Mammary epithelial cell (primary cell): ENCODE measurements at regions of chr19 and their contacts with region 1.

Region 1: GRCh38 chr19:56294549-56294948 is 20.1 kb downstream of the ZSCAN5A start:
- DNase-seq: peak; percentile 94
- H3K4me3 ChIP-seq: peak overlapping the region in 1 of 3 experiments; percentile 21
- H3K27ac ChIP-seq: peak overlapping the region; percentile 82
- H3K4me1 ChIP-seq: peaks cover 29% of the 10 kb centered on the region
- H3K27me3 ChIP-seq: no peaks in the 10 kb centered on the region
- CTCF ChIP-seq: no peak

Region 2: DNA sequence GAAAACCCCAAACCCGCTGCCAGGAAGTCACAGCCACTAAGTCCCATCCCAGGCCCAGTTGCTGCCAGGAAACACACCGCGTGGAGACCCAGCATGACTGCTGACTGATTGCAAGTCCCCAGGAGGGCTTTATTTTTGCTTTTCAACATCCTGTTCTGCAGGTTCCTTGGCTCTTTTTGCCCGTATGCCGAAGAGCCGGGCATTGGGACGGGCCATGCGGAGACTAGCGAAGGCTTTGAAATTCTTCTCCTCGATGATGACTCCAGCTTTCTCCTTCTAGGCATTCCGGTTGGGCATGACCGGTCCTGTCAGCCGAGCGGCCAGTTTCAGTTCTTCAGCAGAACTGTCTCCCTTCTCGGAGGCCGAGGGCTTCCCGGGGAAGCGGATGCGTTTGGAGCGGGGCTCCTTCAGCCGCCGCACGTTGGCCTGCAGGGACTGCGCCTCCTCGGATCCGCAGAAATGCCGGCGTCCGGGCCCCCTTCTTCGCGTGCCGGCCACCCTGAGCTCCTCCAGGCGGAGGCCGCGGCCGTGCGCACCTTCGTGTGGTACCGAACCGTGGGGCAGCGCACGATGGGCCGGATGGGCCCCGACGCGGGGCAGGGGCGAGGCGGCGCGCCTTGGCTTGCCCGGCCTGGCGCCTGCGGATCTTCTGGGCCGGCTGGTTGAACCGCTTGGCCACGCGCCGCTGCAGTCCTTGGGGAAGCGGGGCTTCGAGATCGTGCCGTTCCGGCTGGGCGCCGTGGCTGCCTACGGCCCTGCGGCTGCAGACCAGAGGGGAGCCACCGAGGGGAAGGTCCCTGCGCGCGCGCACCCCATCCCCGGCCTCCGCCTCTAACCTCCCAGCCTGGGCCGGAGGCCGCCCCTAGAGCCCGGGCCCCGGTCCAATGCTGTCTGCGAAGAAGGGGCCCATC is 77.3 kb before region 1 on chr19:
- CTCF ChIA-PET with region 1: no interaction called
- dilution Hi-C with region 1: no loop called
- in situ Hi-C with region 1: no loop called
- intact Hi-C with region 1: loop called (anchors 2 kb)
- DNase-seq: peak; percentile 78
- H3K4me3 ChIP-seq: peak overlapping the region; percentile 42 to 53 (median 46)
- H3K27ac ChIP-seq: no peak overlapping the region
- H3K4me1 ChIP-seq: peaks cover 11% of the 10 kb centered on the region
- H3K27me3 ChIP-seq: no peaks in the 10 kb centered on the region
- CTCF ChIP-seq: no peak

Region 3: GRCh38 chr19:56314562-56315077 is 20.1 kb after region 1 on chr19 and contains the start of gene ZSCAN5A:
- CTCF ChIA-PET with region 1: no interaction called
- dilution Hi-C with region 1: no loop called
- in situ Hi-C with region 1: no loop called
- intact Hi-C with region 1: loop called (anchors 1 kb)
- DNase-seq: peak; percentile 95
- H3K4me3 ChIP-seq: peak within 1 kb of the TSS; percentile 66 to 91 (median 80)
- H3K27ac ChIP-seq: peak within 1 kb of the TSS; percentile 95
- H3K4me1 ChIP-seq: peaks cover 6% of the 10 kb centered on the region
- H3K27me3 ChIP-seq: no peaks in the 10 kb centered on the region
- CTCF ChIP-seq: no peak
- total RNA-seq, gene ZSCAN5A: 5.5 to 7.4 TPM